Activated CD4-positive, alpha-beta T cell treated with anti-CD3 and anti-CD28 coated beads for 36 hours (primary cell): ENCODE measurements at regions of chr16 and their contacts with region 1.

Region 1: DNA sequence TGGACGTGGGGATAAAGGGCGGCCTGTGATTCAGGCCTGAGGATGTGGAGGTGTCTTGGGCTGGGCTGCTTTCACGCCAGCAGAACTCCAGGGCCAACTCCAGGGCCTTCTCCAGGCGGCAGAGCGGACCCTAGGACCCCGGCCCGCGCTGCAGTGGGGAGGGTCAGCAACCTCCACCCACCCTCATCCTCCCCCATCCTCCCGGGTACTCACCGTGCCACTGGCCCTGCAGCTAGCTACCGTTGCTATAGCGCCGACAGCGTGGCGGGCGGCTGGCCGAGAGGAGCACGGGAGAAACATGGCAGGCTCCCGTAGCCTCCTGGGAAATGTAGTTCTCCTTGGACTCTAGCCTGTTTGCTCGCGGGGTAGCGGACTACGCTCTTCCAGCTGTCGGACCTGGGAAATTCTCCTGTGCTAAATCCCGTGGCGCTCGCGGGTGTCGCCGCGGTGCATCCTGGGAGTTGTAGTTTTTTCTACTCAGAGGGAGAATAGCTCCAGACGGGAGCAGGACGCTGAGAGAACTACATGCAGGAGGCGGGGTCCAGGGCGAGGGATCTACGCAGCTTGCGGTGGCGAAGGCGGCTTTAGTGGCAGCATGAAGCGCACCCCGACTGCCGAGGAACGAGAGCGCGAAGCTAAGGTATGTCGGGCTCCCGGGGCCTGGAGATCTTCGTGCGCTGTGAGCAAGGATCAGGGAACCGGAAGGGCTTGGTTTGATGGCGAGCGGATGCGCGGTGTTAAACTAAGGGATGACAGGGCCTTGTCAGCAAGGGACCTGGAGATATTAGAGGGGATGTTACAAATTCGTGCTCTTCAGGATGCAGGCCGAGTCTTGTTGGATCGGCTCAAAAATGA is at the starts of genes FTO and RPGRIP1L:
- DNase-seq: peak; percentile 99
- ATAC-seq: peak; percentile 98
- H3K4me3 Mint-ChIP-seq: peak within 1 kb of the TSS; percentile 96
- H3K27ac Mint-ChIP-seq: peak within 1 kb of the TSS; percentile 97
- H3K4me1 Mint-ChIP-seq: peaks cover 35% of the 10 kb centered on the region
- H3K27me3 Mint-ChIP-seq: no peaks in the 10 kb centered on the region
- total RNA-seq, gene FTO: 50.9 to 57.6 TPM
- total RNA-seq, gene RPGRIP1L: 7.8 to 10.2 TPM

Region 2: DNA sequence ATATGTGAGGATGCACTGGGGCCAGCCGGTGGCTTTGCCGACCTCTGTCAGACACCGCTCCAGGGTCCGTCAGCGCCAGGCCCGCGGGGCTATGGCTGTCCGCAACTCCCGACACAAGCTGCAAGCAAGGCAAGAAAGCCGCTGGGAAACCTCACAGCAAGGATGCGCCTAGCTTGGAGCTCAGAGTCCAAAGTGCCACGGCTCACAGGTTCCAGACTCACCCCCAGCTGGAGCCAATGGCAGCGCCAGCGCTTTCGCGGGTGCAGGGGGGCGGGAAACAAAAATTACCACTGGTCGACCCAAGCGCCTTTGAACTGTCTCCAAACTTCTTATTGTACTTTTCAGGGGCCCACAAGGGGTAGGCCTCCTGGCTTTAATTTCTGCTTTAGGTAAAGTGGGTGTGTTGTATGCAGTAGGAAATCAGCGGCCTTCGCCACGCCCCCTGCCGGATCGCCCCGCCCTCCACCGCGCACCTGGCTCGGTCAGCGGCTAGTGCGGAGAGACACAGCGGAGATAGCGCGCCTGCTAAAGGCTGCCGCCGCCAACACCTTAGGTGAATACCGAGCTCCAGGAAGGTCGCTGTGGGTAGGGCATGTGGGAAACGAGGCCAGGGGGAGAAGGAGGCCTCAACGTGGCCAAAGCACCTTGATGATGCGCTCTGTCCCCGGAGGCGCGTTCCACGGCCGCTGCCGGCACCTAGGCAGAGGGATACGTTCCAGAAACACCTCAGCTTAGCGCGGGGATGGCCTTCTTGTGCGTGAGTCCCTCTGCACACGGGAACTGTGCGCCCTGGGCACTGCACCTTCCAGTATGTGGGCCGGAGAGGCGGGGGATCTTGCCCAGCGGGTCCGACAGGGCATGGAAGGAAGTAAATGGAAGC is 330.6 kb before region 1 on chr16:
- CTCF ChIA-PET with region 1: no interaction called
- POLR2A ChIA-PET with region 1: no interaction called
- intact Hi-C with region 1: loop called in 1 of 2 experiments (anchors 10 kb)
- DNase-seq: peak; percentile 88
- ATAC-seq: peak; percentile 97
- H3K4me3 Mint-ChIP-seq: no peak overlapping the region
- H3K27ac Mint-ChIP-seq: peak overlapping the region; percentile 61
- H3K4me1 Mint-ChIP-seq: peaks cover 24% of the 10 kb centered on the region
- H3K27me3 Mint-ChIP-seq: no peaks in the 10 kb centered on the region

Region 3: DNA sequence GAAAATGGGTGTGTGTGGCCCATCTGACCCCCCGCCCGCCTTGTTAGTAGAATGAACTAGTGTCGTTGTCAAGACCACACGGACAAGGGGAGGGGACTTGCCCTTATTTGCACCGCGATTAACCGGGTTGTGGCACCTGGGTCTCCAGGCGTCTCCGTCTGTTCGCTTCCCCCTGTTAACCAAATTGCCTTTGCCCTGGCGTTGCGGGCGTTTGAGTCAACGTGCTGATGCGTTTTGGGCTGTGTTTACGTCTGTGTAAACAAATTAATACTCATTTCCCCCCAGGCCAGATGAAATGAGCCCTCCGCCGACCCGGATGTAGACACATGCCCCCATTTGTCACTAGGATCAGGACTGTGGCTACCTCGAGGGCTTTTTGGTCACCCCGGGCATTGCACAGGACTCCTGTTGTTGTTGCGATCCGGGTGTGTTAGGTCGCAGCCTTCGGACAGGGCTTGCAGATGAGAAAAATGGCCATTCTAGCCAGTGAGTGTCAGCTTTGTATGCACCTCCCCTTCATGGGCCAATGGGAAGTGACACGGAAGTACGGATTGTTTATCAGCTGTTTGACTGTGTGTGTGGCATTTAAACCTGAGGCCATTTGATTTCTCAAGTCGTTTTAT is 268.6 kb before region 1 on chr16:
- CTCF ChIA-PET with region 1: no interaction called
- POLR2A ChIA-PET with region 1: no interaction called
- intact Hi-C with region 1: loop called in 1 of 2 experiments (anchors 1 kb)
- DNase-seq: peak; percentile 69
- ATAC-seq: peak; percentile 67
- H3K4me3 Mint-ChIP-seq: peak overlapping the region; percentile 98
- H3K27ac Mint-ChIP-seq: peak overlapping the region; percentile 95
- H3K4me1 Mint-ChIP-seq: peaks cover 42% of the 10 kb centered on the region
- H3K27me3 Mint-ChIP-seq: no peaks in the 10 kb centered on the region

Region 4: DNA sequence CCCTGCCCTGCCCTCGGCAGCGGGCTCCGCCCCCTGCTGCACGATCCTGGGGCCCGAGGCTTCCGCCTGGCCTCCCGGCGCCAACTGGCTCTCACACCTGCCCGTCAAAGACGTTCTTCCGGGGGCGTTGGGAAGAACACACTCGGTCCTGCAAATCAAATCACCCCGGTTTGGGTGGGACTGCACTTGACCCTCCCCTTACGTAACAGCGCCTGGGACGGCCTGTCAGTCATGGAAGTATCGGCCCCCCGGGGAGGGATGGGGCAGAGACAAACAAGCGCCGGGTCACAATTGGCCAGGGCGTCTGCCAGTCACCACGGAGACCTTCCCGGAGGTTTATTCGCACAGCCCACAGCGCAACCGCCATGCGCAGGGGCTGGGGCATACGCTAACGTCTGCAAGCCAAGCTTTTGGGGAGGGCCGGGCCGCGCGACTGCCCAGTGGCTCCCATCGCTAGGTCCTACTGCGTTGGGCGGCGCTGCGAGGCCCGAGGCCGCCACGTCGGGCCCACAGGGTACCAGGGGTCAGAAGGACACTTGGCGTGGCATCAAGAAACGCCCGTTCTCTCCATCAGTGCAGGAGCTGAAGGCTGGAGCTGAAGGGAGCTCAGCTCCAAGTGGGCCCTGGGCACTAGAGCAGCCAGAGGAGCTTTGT is 200.4 kb before region 1 on chr16:
- CTCF ChIA-PET with region 1: no interaction called
- POLR2A ChIA-PET with region 1: no interaction called
- intact Hi-C with region 1: loop called (anchors 1 to 2 kb)
- DNase-seq: peak; percentile 100
- ATAC-seq: peak; percentile 92
- H3K4me3 Mint-ChIP-seq: peak overlapping the region; percentile 94
- H3K27ac Mint-ChIP-seq: peak overlapping the region; percentile 96
- H3K4me1 Mint-ChIP-seq: peaks cover 60% of the 10 kb centered on the region
- H3K27me3 Mint-ChIP-seq: no peaks in the 10 kb centered on the region

Region 5: GRCh38 chr16:53664724-53665345 is 39.0 kb before region 1 on chr16:
- CTCF ChIA-PET with region 1: interaction called, 3 read pairs
- POLR2A ChIA-PET with region 1: interaction called, 3 read pairs
- intact Hi-C with region 1: loop called in 1 of 2 experiments (anchors 1 kb)
- DNase-seq: peak; percentile 58
- ATAC-seq: peak; percentile 99
- H3K4me3 Mint-ChIP-seq: no peak overlapping the region
- H3K27ac Mint-ChIP-seq: no peak overlapping the region
- H3K4me1 Mint-ChIP-seq: peaks cover 16% of the 10 kb centered on the region
- H3K27me3 Mint-ChIP-seq: no peaks in the 10 kb centered on the region

Region 6: DNA sequence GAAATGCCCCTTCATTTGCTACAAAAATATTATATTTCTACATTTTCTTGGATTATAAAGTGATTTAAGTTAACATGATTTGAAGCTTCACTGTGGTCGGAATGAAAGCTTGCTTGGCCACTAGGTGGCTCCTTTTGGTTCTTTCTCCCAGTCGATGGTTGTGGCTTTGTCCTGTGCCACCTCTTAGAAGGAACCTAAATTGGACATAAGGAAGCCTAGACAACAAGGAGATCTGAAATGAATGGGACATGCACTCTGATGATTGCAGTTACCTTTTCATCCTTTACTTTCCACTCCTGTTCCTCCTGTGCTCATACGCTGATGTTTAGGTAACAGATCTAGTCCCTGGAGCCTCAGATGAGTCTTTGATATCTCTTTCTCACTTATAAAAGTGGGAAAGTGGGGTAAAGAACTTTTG is 39.3 kb after region 1 on chr16:
- CTCF ChIA-PET with region 1: interaction called, 6 read pairs
- POLR2A ChIA-PET with region 1: no interaction called
- intact Hi-C with region 1: loop called in 1 of 2 experiments (anchors 2 kb)
- DNase-seq: peak; percentile 48
- ATAC-seq: no peak
- H3K4me3 Mint-ChIP-seq: no peak overlapping the region
- H3K27ac Mint-ChIP-seq: no peak overlapping the region
- H3K4me1 Mint-ChIP-seq: peaks cover 25% of the 10 kb centered on the region
- H3K27me3 Mint-ChIP-seq: no peaks in the 10 kb centered on the region